CD4-positive, alpha-beta T cell (primary cell): ENCODE measurements at regions of chr21 and their contacts with region 1.

Region 1: GRCh38 chr21:46097336-46098293 is at the start of gene COL6A2:
- DNase-seq: peak in 13 of 14 experiments; percentile 26 to 72 (median 51)
- ATAC-seq: peak; percentile 90
- H3K4me3 ChIP-seq: peak within 1 kb of the TSS; percentile 41
- H3K4me3 Mint-ChIP-seq: peak within 1 kb of the TSS; percentile 76
- H3K27ac ChIP-seq: no peak within 1 kb of the TSS
- H3K27ac Mint-ChIP-seq: no peak within 1 kb of the TSS
- H3K4me1 ChIP-seq: peaks cover 34% of the 10 kb centered on the region
- H3K4me1 Mint-ChIP-seq: peaks cover 11% of the 10 kb centered on the region
- H3K27me3 ChIP-seq: peaks cover 6 to 14% of the 10 kb centered on the region in 2 experiments
- H3K27me3 Mint-ChIP-seq: peaks cover 25% of the 10 kb centered on the region
- CTCF ChIP-seq: no peak
- total RNA-seq, gene COL6A2: 24.1 to 26.4 TPM

Region 2: GRCh38 chr21:46079352-46080170 is 18.1 kb before region 1 on chr21:
- CTCF ChIA-PET with region 1: no interaction called
- POLR2A ChIA-PET with region 1: no interaction called
- intact Hi-C with region 1: no loop called
- DNase-seq: no peak
- ATAC-seq: no peak
- H3K4me3 ChIP-seq: no peak overlapping the region
- H3K4me3 Mint-ChIP-seq: no peak overlapping the region
- H3K27ac ChIP-seq: no peak overlapping the region
- H3K27ac Mint-ChIP-seq: no peak overlapping the region
- H3K4me1 ChIP-seq: no peaks in the 10 kb centered on the region
- H3K4me1 Mint-ChIP-seq: no peaks in the 10 kb centered on the region
- H3K27me3 ChIP-seq: no peaks in the 10 kb centered on the region
- H3K27me3 Mint-ChIP-seq: peaks cover 13% of the 10 kb centered on the region
- CTCF ChIP-seq: no peak

Region 3: GRCh38 chr21:46184625-46185555 is 87.3 kb after region 1 on chr21:
- CTCF ChIA-PET with region 1: no interaction called
- POLR2A ChIA-PET with region 1: no interaction called
- intact Hi-C with region 1: loop called in 1 of 2 experiments (anchors 10 kb)
- DNase-seq: peak; percentile 19 to 82 (median 53)
- ATAC-seq: peak; percentile 75
- H3K4me3 ChIP-seq: peak overlapping the region; percentile 64
- H3K4me3 Mint-ChIP-seq: peak overlapping the region; percentile 80
- H3K27ac ChIP-seq: peak overlapping the region; percentile 59 to 85
- H3K27ac Mint-ChIP-seq: peak overlapping the region; percentile 31
- H3K4me1 ChIP-seq: peaks cover 25% of the 10 kb centered on the region
- H3K4me1 Mint-ChIP-seq: peaks cover 11% of the 10 kb centered on the region
- H3K27me3 ChIP-seq: peaks cover 0 to 3% of the 10 kb centered on the region in 2 experiments
- H3K27me3 Mint-ChIP-seq: no peaks in the 10 kb centered on the region
- CTCF ChIP-seq: no peak